Heart right ventricle (tissue), 16 donors: ENCODE measurements at regions of chr13 and their contacts with region 1.

Region 1: GRCh38 chr13:114065141-114065925 is 67.1 kb downstream of the RASA3 start:
- DNase-seq: peak; percentile 82 to 84
- ATAC-seq: peak; percentile 88 to 94 (median 90)
- H3K4me3 ChIP-seq: peak overlapping the region in 8 of 10 donors; percentile 16 to 49 (median 40)
- H3K27ac ChIP-seq: peak overlapping the region; percentile 74 to 98 (median 90)
- H3K4me1 ChIP-seq: peaks cover 12 to 77% (median 54%) of the 10 kb centered on the region in 9 donors
- H3K27me3 ChIP-seq: no peaks in the 10 kb centered on the region
- CTCF ChIP-seq: no peak

Region 2: GRCh38 chr13:113296842-113297369 is 768.4 kb before region 1 on chr13 and contains the start of gene LAMP1:
- intact Hi-C with region 1: no loop called
- DNase-seq: peak; percentile 97 to 100
- ATAC-seq: peak; percentile 95 to 97 (median 96)
- H3K4me3 ChIP-seq: peak within 1 kb of the TSS; percentile 68 to 95 (median 82)
- H3K27ac ChIP-seq: peak within 1 kb of the TSS; percentile 25 to 96 (median 86)
- H3K4me1 ChIP-seq: peaks cover 0 to 49% (median 25%) of the 10 kb centered on the region in 9 donors
- H3K27me3 ChIP-seq: peaks cover 0 to 7% (median 0%) of the 10 kb centered on the region in 7 donors
- CTCF ChIP-seq: no peak
- total RNA-seq, gene LAMP1: 80.4 to 153 (median 101) TPM

Region 3: DNA sequence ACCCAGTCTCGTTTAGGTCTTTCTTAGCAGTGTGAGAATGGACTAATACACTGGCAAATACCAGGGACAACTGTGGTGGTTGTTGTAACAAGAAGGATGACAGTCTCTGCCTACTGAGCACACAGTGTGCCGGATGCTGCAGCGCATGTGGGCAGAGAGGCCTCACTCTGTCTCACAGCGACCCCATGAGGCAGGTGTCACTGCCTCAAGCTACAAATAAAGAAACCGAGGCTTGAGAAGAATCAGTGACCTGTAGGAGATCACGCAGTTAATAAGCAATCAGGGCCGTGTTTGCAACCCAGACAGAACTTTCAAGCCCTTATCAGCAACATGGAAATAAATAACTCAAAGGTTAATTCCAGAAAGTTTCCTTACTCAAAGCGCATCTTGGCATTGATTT is 160.9 kb before region 1 on chr13:
- intact Hi-C with region 1: no loop called
- DNase-seq: peak; percentile 62 to 68
- ATAC-seq: peak; percentile 82 to 96 (median 92)
- H3K4me3 ChIP-seq: no peak overlapping the region
- H3K27ac ChIP-seq: no peak overlapping the region
- H3K4me1 ChIP-seq: peaks cover 0 to 16% (median 0%) of the 10 kb centered on the region in 9 donors
- H3K27me3 ChIP-seq: peaks cover 0 to 19% (median 0%) of the 10 kb centered on the region in 7 donors
- CTCF ChIP-seq: peak; percentile 61 to 85 (median 74)

Region 4: DNA sequence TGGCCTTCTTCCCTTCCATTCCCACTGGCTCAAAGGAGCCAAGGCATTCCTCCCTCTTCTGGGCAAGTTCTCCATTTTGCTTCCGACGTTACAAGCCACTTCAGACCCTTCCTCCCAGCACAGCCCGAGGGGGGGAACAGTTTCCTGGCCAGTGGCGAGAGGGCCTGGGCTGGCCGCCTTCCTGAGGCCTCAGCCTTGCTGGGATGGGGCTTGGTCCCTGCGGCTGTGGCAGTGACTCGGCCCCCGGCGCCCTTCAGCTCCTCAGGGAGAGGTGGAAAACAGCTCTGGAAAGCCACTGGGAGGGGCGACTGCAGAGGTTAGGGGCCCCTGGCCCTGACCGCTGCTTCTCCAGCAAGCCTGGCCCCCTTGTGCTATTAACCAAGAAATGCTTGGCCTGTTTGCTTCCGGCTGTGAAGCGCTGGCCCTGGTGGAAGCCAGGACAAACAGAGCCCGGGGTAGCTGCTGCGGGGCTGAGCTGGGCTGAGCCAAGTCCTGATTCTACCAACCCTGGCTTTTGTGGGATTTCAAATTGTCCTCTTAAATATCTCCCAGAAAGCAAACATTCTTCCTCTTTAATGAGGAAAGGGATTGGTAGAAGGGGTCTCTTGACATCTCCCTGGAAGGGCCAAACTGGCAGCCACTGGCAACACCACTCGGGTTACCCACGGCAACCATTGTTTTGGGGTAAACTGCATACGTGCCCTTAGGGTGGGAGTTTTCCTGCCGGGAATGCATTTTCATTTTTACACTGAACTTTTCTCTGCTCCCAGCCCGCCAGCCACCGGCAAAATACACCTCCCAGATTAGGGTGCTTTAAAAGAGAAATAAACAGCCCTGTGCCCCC is 130.1 kb before region 1 on chr13:
- intact Hi-C with region 1: no loop called
- DNase-seq: no peak
- ATAC-seq: peak in 7 of 8 donors; percentile 11 to 56 (median 29)
- H3K4me3 ChIP-seq: no peak overlapping the region
- H3K27ac ChIP-seq: peak overlapping the region in 6 of 10 donors; percentile 16 to 75 (median 36)
- H3K4me1 ChIP-seq: peaks cover 3 to 48% (median 14%) of the 10 kb centered on the region in 9 donors
- H3K27me3 ChIP-seq: peaks cover 0 to 17% (median 2%) of the 10 kb centered on the region in 7 donors
- CTCF ChIP-seq: no peak

Region 5: DNA sequence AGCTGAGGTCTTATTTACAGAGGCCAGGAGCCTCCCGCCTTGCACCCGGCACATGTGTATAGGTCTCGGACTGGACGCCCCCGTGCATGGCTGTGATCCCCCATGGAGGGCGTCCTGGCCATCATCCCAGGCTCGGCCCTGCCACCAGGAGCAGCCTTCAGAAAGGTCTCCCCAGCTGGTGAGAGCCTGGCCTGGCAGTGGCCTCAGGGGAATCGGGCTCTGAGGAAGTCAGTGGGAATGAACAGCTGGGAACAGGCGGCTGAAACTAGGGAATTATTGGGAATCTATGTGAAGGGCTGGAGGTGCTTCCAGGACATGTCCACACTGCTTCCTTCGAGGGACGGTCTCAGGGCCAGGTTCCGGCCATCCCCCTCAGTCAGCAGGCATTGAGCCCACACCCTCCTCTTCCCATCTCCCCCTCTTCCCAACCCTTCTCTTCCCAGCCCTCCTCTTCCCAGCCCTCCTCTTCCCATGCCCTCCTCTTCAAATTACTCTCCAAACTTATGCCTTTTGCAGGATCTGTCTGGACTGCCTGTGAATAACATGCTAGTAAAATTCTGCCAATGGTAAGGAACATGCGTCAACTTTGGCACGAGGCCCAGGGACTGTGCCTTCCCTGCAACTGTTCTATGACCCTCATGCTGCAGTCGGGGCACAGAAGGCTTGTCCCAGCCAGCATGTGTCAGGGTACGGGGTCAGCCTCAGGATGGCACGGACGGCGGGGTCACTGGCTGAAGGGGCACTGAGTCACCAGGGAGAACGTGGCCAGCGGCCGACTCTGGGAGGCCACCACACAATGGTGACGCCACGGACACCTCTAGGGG is 67.3 kb before region 1 on chr13:
- intact Hi-C with region 1: loop called in 1 of 10 experiments (anchors 10 kb)
- DNase-seq: peak; percentile 48 to 59
- ATAC-seq: peak; percentile 18 to 68 (median 50)
- H3K4me3 ChIP-seq: no peak overlapping the region
- H3K27ac ChIP-seq: peak overlapping the region in 6 of 10 donors; percentile 23 to 65 (median 34)
- H3K4me1 ChIP-seq: peaks cover 0 to 15% (median 5%) of the 10 kb centered on the region in 9 donors
- H3K27me3 ChIP-seq: no peaks in the 10 kb centered on the region
- CTCF ChIP-seq: no peak

Region 6: GRCh38 chr13:114025714-114026431 is 39.5 kb before region 1 on chr13:
- intact Hi-C with region 1: loop called in 1 of 10 experiments (anchors 5 kb)
- DNase-seq: peak in 1 of 2 donors; percentile 26
- ATAC-seq: peak; percentile 27 to 59 (median 48)
- H3K4me3 ChIP-seq: no peak overlapping the region
- H3K27ac ChIP-seq: peak overlapping the region in 4 of 10 donors; percentile 2 to 75 (median 43)
- H3K4me1 ChIP-seq: peaks cover 8 to 30% (median 27%) of the 10 kb centered on the region in 9 donors
- H3K27me3 ChIP-seq: no peaks in the 10 kb centered on the region
- CTCF ChIP-seq: no peak